CD4-positive, alpha-beta T cell (primary cell): ENCODE measurements at regions of chr16 and their contacts with region 1.

Region 1: GRCh38 chr16:3305109-3306068 is at the starts of genes TIGD7 and ZNF75A:
- DNase-seq: peak; percentile 67 to 96 (median 79)
- ATAC-seq: peak; percentile 92
- H3K4me3 ChIP-seq: peak within 1 kb of the TSS; percentile 91
- H3K4me3 Mint-ChIP-seq: peak within 1 kb of the TSS; percentile 86
- H3K27ac ChIP-seq: peak within 1 kb of the TSS; percentile 76 to 89
- H3K27ac Mint-ChIP-seq: peak within 1 kb of the TSS; percentile 82
- H3K4me1 ChIP-seq: peaks cover 28% of the 10 kb centered on the region
- H3K4me1 Mint-ChIP-seq: peaks cover 22% of the 10 kb centered on the region
- H3K27me3 ChIP-seq: no peaks in the 10 kb centered on the region
- H3K27me3 Mint-ChIP-seq: no peaks in the 10 kb centered on the region
- CTCF ChIP-seq: no peak
- total RNA-seq, gene TIGD7: 1.5 to 1.7 TPM
- total RNA-seq, gene ZNF75A: 41.7 to 42.2 TPM

Region 2: DNA sequence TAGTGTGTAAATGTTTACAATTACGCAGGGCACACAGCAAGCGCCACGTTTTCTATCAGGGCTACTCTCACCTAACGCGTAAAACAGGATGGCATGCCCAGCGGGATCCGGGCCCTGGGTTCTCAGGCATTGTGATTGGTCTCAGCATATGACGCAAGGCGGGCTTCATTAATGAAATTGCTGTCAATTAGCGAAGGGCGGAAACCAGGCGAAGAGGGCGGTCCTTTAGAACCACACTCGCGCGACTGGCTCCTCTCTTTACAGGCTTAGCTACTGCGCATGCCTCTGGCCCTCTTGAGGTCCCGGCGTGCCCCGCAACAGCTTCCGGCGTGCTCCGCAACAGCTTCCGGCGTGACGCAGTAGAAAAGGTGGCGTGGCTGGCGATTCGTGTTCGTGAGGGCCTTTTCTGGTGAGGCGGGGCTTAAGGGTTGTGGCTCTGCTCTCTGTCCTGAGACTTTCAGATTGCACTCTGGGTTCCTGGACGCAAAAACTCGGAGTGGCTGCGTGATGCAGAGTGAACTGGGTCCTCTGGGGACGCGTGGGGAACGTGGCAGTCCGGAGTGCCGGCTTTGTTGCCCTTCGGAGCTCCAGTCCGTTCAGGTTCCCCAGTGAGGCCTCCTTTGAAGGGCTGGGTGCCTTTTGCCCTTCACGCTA is 59.5 kb after region 1 on chr16:
- CTCF ChIA-PET with region 1: no interaction called
- POLR2A ChIA-PET with region 1: interaction called, 5 read pairs
- intact Hi-C with region 1: loop called in 1 of 2 experiments (anchors 5 kb)
- DNase-seq: peak; percentile 70 to 97 (median 80)
- ATAC-seq: peak; percentile 94
- H3K4me3 ChIP-seq: peak overlapping the region; percentile 56
- H3K4me3 Mint-ChIP-seq: peak overlapping the region; percentile 92
- H3K27ac ChIP-seq: peak overlapping the region; percentile 38 to 82
- H3K27ac Mint-ChIP-seq: peak overlapping the region; percentile 89
- H3K4me1 ChIP-seq: peaks cover 17% of the 10 kb centered on the region
- H3K4me1 Mint-ChIP-seq: peaks cover 6% of the 10 kb centered on the region
- H3K27me3 ChIP-seq: peaks cover 10 to 11% of the 10 kb centered on the region in 2 experiments
- H3K27me3 Mint-ChIP-seq: peaks cover 30% of the 10 kb centered on the region
- CTCF ChIP-seq: no peak

Region 3: GRCh38 chr16:3443108-3444031 is 138.0 kb after region 1 on chr16 and contains the starts of genes NAA60 and ZNF597:
- CTCF ChIA-PET with region 1: interaction called, 3 read pairs
- POLR2A ChIA-PET with region 1: interaction called, 7 read pairs
- intact Hi-C with region 1: loop called in 1 of 2 experiments (anchors 5 kb)
- DNase-seq: peak; percentile 50 to 92 (median 72)
- ATAC-seq: peak; percentile 90
- H3K4me3 ChIP-seq: peak within 1 kb of the TSS; percentile 71
- H3K4me3 Mint-ChIP-seq: peak within 1 kb of the TSS; percentile 98
- H3K27ac ChIP-seq: peak within 1 kb of the TSS; percentile 70 to 79
- H3K27ac Mint-ChIP-seq: peak within 1 kb of the TSS; percentile 95
- H3K4me1 ChIP-seq: peaks cover 25% of the 10 kb centered on the region
- H3K4me1 Mint-ChIP-seq: peaks cover 24% of the 10 kb centered on the region
- H3K27me3 ChIP-seq: no peaks in the 10 kb centered on the region
- H3K27me3 Mint-ChIP-seq: no peaks in the 10 kb centered on the region
- CTCF ChIP-seq: no peak
- total RNA-seq, gene NAA60: 27.2 to 27.8 TPM
- total RNA-seq, gene ZNF597: 2.3 to 2.5 TPM